ENCODE measurements at regions of chr15 and their contacts with region 1.

Region 1: GRCh38 chr15:60507596-60508424 is 28.9 kb upstream of the ICE2 start:
- ATAC-seq: peak in 6 of 8 experiments; percentile 36 to 96 (median 68)
- H3K4me3 ChIP-seq: no peak overlapping the region
- H3K27ac ChIP-seq: no peak overlapping the region
- H3K4me1 ChIP-seq: no peaks in the 10 kb centered on the region

Region 2: GRCh38 chr15:60374628-60375081 is 133.2 kb before region 1 on chr15:
- in situ Hi-C with region 1: loop called in 1 of 9 experiments (anchors 25 kb)
- ATAC-seq: peak; percentile 64 to 96 (median 95)
- H3K4me3 ChIP-seq: no peak overlapping the region
- H3K27ac ChIP-seq: peak overlapping the region; percentile 61 to 71
- H3K4me1 ChIP-seq: peaks cover 51 to 52% of the 10 kb centered on the region in 2 donors

Region 3: DNA sequence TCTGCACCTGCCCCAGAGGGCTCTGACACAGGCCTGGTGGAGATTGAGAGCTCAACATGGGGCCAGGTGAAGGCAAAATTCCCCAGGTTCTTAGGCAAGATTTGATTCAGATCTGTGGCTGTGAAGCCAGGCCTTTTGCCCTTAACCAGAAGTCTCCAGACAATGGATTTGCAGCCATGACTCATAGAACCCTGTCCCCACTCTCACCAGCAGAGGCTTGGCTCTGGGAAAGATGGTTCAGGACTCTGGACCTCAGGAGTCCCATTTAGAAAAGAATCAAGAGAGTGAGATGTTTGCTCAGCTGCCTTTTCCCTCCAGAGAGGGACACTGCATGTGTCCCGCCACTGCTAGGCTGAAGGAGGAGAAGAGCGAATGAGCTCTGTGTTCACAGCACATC is 332.5 kb after region 1 on chr15:
- in situ Hi-C with region 1: no loop called
- ATAC-seq: peak in 5 of 8 experiments; percentile 13 to 57 (median 39)
- H3K4me3 ChIP-seq: no peak overlapping the region
- H3K27ac ChIP-seq: no peak overlapping the region
- H3K4me1 ChIP-seq: peaks cover 0 to 10% of the 10 kb centered on the region in 2 donors